ENCODE measurements at regions of chr3 and their contacts with region 1.

Region 1: DNA sequence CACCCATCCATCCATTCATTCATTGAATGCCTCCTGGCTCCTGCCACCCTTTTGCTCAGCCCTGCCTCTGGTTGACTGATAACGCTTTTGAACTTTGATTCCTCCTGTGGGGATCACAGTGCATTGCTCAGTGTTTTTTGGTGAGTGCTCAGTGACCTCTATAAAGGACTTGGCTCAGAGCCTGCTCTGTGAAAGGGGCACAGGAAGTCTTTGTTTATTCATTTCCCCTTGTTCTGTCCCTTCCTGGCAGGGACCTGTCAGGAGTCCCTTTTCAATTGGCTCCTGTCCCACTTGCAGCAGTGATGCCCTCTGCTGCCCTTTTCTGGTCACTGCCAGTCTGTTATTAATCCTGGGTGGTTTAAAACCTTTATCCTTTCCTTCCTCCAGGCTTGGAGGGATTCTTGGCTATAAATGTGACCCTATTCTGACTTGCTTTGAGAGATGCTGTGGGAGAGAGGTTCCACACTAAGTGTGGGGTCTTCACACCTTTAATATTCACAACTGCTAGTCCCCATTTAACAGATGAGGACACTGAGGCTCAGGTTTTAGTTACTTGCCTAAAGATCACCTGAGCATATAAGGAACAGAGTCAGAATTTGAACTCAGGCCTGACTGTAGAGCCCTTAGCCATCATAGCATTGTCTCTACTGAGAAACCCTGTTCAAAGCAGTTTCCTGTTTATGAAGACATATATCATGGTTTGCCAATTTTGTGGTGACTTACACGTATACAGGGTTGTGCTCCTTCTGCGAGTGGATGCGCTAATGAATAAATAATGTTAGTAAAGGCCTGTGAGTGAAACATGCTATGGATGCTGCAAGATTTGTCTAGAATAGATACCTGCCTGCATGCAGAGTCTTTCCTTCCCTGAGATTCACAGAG is 23.2 kb upstream of the TATDN2 start:
- DNase-seq: peak; percentile 39 to 76 (median 54)
- H3K4me3 ChIP-seq: no peak overlapping the region
- H3K4me3 Mint-ChIP-seq: peak overlapping the region in 6 of 7 donors; percentile 56 to 77 (median 64)
- H3K27ac ChIP-seq: no peak overlapping the region
- H3K27ac Mint-ChIP-seq: peak overlapping the region; percentile 57 to 96 (median 90)
- H3K4me1 ChIP-seq: peaks cover 26% of the 10 kb centered on the region
- H3K4me1 Mint-ChIP-seq: peaks cover 52 to 68% (median 59%) of the 10 kb centered on the region in 3 donors
- H3K27me3 ChIP-seq: no peaks in the 10 kb centered on the region
- H3K27me3 Mint-ChIP-seq: no peaks in the 10 kb centered on the region

Region 2: GRCh38 chr3:9013782-9014563 is 1211.1 kb before region 1 on chr3:
- CTCF ChIA-PET with region 1: no interaction called
- POLR2A ChIA-PET with region 1: no interaction called
- DNase-seq: no peak
- H3K4me3 ChIP-seq: no peak overlapping the region
- H3K4me3 Mint-ChIP-seq: no peak overlapping the region
- H3K27ac ChIP-seq: no peak overlapping the region
- H3K27ac Mint-ChIP-seq: no peak overlapping the region
- H3K4me1 ChIP-seq: no peaks in the 10 kb centered on the region
- H3K4me1 Mint-ChIP-seq: peaks cover 0 to 10% (median 3%) of the 10 kb centered on the region in 3 donors
- H3K27me3 ChIP-seq: no peaks in the 10 kb centered on the region
- H3K27me3 Mint-ChIP-seq: peaks cover 1 to 4% of the 10 kb centered on the region in 2 donors

Region 3: DNA sequence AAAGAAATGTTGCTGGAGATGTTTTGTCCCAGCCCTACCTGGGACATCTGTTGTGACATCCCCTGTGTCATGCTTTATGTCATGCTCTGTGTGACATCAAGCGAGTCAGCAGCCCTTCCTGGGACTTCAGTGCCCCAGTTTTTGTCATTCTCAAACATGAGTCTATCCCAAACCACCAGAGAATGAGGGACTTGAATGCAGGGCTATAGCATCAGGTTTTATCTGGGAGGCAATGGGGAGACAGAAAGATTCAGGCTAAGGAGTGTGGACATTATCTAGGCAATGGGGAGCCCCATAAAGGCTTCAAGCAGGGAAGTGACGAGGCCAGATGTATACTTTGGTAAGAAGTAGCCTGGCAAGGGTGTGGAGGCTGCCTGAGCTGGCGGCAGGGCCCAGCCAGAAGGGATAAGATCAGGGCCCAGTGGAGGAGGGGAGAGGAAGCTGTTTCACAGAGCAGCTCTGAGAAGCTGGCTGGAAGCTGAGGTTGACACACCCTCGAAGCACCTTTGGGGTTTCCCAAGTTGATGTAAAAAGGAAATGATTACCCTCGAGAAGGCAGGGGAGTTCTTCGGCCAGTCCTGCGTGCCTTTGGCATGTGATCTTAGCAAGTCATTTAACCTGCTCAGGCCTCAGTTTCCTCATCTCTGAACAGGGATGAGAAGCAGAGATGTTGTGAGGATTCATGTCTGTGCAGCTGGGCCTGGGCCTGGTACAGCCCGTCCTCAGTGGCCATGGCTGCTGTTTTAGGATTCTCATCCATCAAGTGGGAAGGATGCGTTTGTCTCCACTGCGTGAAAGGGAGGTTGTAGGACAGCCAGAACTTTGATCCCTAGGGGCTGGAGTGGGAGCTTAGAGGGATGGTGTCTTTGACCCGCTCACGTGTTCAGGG is 26.0 kb before region 1 on chr3:
- CTCF ChIA-PET with region 1: interaction called, 16 read pairs
- POLR2A ChIA-PET with region 1: interaction called, 9 read pairs
- DNase-seq: peak; percentile 51 to 80 (median 61)
- H3K4me3 ChIP-seq: peak overlapping the region; percentile 42
- H3K4me3 Mint-ChIP-seq: peak overlapping the region; percentile 13 to 82 (median 71)
- H3K27ac ChIP-seq: peak overlapping the region; percentile 48
- H3K27ac Mint-ChIP-seq: peak overlapping the region; percentile 81 to 100 (median 95)
- H3K4me1 ChIP-seq: peaks cover 61% of the 10 kb centered on the region
- H3K4me1 Mint-ChIP-seq: peaks cover 56 to 69% (median 65%) of the 10 kb centered on the region in 3 donors
- H3K27me3 ChIP-seq: no peaks in the 10 kb centered on the region
- H3K27me3 Mint-ChIP-seq: no peaks in the 10 kb centered on the region

Region 4: GRCh38 chr3:10248184-10249080 is 23.4 kb after region 1 on chr3 and contains the start of gene TATDN2:
- CTCF ChIA-PET with region 1: no interaction called
- POLR2A ChIA-PET with region 1: no interaction called
- DNase-seq: peak; percentile 87 to 95 (median 91)
- H3K4me3 ChIP-seq: peak within 1 kb of the TSS; percentile 89
- H3K4me3 Mint-ChIP-seq: peak within 1 kb of the TSS; percentile 98 to 100 (median 99)
- H3K27ac ChIP-seq: peak within 1 kb of the TSS; percentile 83
- H3K27ac Mint-ChIP-seq: peak within 1 kb of the TSS; percentile 85 to 99 (median 97)
- H3K4me1 ChIP-seq: peaks cover 30% of the 10 kb centered on the region
- H3K4me1 Mint-ChIP-seq: peaks cover 47 to 62% (median 51%) of the 10 kb centered on the region in 3 donors
- H3K27me3 ChIP-seq: no peaks in the 10 kb centered on the region
- H3K27me3 Mint-ChIP-seq: no peaks in the 10 kb centered on the region
- total RNA-seq, gene TATDN2: 57.6 to 60.0 TPM

Measured in CD8-positive, alpha-beta memory T cell (primary cell).